Endothelial cell of umbilical vein (primary cell): ENCODE measurements at regions of chr9 and their contacts with region 1.

Region 1: GRCh38 chr9:114653556-114654159 is 3.9 kb downstream of the TEX53 start:
- DNase-seq: peak; percentile 76
- H3K4me3 ChIP-seq: no peak overlapping the region
- H3K27ac ChIP-seq: no peak overlapping the region
- H3K4me1 ChIP-seq: no peaks in the 10 kb centered on the region
- H3K27me3 ChIP-seq: peaks cover 0 to 1% of the 10 kb centered on the region in 2 experiments
- CTCF ChIP-seq: peak; percentile 89 to 93
- POLR2A ChIP-seq: no peak

Region 2: GRCh38 chr9:114339130-114339908 is 314.3 kb before region 1 on chr9:
- CTCF ChIA-PET with region 1: interaction called, 9 read pairs
- POLR2A ChIA-PET with region 1: no interaction called
- dilution Hi-C with region 1: no loop called
- intact Hi-C with region 1: loop called (anchors 1 kb)
- DNase-seq: peak; percentile 29
- H3K4me3 ChIP-seq: no peak overlapping the region
- H3K27ac ChIP-seq: no peak overlapping the region
- H3K4me1 ChIP-seq: no peaks in the 10 kb centered on the region
- H3K27me3 ChIP-seq: no peaks in the 10 kb centered on the region
- CTCF ChIP-seq: peak; percentile 88 to 89
- POLR2A ChIP-seq: no peak

Region 3: GRCh38 chr9:114446036-114446435 is 207.6 kb before region 1 on chr9:
- CTCF ChIA-PET with region 1: interaction called, 10 read pairs
- POLR2A ChIA-PET with region 1: no interaction called
- dilution Hi-C with region 1: no loop called
- intact Hi-C with region 1: no loop called
- DNase-seq: peak; percentile 63
- H3K4me3 ChIP-seq: no peak overlapping the region
- H3K27ac ChIP-seq: peak overlapping the region; percentile 46
- H3K4me1 ChIP-seq: peaks cover 16% of the 10 kb centered on the region
- H3K27me3 ChIP-seq: no peaks in the 10 kb centered on the region
- CTCF ChIP-seq: no peak
- POLR2A ChIP-seq: no peak

Region 4: GRCh38 chr9:114493521-114494184 is 160.0 kb before region 1 on chr9:
- CTCF ChIA-PET with region 1: interaction called, 133 read pairs
- POLR2A ChIA-PET with region 1: no interaction called
- dilution Hi-C with region 1: no loop called
- intact Hi-C with region 1: no loop called
- DNase-seq: peak; percentile 33
- H3K4me3 ChIP-seq: no peak overlapping the region
- H3K27ac ChIP-seq: no peak overlapping the region
- H3K4me1 ChIP-seq: no peaks in the 10 kb centered on the region
- H3K27me3 ChIP-seq: peaks cover 18 to 29% of the 10 kb centered on the region in 2 experiments
- CTCF ChIP-seq: no peak
- POLR2A ChIP-seq: no peak

Region 5: DNA sequence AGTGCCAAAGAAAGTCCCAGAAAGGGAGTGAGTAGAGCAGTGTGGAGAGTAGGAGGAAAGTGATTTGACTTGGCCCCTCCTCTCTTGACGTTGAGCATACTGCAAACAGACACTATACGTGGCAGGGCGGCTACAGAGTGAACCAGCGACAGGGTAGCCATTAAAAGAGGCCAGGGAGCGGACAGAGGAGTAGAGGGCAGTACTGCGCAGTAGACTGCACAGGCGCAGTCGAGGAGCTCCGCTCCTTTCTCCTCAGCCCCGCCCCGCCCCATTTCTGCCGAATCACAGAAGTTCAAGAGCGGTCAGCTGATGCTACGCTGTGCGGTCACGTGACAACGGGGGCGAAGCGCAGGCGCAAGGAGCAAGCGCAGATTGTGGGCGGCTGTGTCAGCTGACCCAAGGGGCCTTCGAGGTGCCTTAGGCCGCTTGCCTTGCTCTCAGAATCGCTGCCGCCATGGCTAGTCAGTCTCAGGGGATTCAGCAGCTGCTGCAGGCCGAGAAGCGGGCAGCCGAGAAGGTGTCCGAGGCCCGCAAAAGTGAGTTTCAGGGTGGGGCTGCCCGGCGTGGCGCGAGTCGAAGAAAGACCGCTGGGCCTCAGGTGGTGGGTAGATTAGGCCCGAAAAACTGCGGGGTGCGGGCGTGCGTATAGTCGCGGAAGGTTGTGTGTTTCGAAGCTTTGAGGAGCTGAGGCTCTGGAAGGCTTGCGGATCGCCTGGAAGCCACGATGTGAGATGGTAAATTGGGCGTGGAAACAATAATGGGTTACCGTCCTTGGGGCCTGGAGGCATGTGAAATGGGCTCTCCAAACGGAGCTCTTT is 66.1 kb before region 1 on chr9 and contains the start of gene ATP6V1G1:
- CTCF ChIA-PET with region 1: interaction called, 90 read pairs
- POLR2A ChIA-PET with region 1: interaction called, 3 read pairs
- dilution Hi-C with region 1: no loop called
- intact Hi-C with region 1: loop called (anchors 1 kb)
- DNase-seq: peak; percentile 99
- H3K4me3 ChIP-seq: peak within 1 kb of the TSS; percentile 24 to 79 (median 73)
- H3K27ac ChIP-seq: peak within 1 kb of the TSS; percentile 66
- H3K4me1 ChIP-seq: peaks cover 23% of the 10 kb centered on the region
- H3K27me3 ChIP-seq: no peaks in the 10 kb centered on the region
- CTCF ChIP-seq: peak in 1 of 2 donors; percentile 11
- POLR2A ChIP-seq: peak; percentile 91
- total RNA-seq, gene ATP6V1G1: 78.9 and 82.0 TPM in 2 replicates

Region 6: DNA sequence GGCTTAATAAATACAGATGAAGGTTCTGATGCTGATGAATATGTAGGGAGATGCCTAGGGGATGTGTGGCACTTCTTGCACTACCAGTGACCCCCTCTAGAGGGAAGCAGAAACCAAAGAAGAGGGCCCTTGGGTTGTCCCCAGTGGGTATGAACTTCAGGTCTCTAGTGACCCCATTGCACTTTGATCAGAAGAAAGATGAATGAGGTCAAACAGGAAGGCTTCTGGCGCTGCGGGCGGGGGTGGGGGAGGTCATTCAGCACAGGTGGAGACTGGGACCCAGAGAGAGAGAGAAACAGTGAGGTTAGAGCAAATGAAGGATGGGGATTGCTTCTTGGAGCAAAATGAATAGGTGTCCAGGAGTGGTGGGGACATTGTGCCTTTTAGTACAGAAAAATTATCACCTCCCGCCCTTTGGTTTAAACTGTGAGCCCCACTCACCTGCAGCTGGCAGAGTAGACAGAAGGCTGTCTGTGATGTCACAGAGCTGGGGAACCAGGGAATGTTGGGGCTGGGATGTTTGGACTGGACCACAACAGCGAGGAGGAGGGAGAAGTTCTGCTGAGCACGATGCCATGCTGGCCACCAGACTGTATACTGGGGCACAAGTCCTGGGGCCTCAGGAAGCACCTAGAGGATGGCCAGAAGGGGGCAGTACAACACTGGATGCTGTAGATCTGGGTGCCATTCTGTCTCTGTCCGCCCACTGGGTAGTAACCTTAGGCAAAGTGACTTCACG is 28.1 kb after region 1 on chr9 and contains the start of gene TEX48:
- CTCF ChIA-PET with region 1: interaction called, 10 read pairs
- POLR2A ChIA-PET with region 1: no interaction called
- dilution Hi-C with region 1: no loop called
- intact Hi-C with region 1: no loop called
- DNase-seq: peak; percentile 52
- H3K4me3 ChIP-seq: no peak within 1 kb of the TSS
- H3K27ac ChIP-seq: no peak within 1 kb of the TSS
- H3K4me1 ChIP-seq: peaks cover 23% of the 10 kb centered on the region
- H3K27me3 ChIP-seq: no peaks in the 10 kb centered on the region
- CTCF ChIP-seq: peak; percentile 67 to 78
- POLR2A ChIP-seq: no peak
- total RNA-seq, gene TEX48: not detected in 2 replicates

Region 7: GRCh38 chr9:114779352-114779845 is 125.7 kb after region 1 on chr9:
- CTCF ChIA-PET with region 1: no interaction called
- POLR2A ChIA-PET with region 1: no interaction called
- dilution Hi-C with region 1: no loop called
- intact Hi-C with region 1: no loop called
- DNase-seq: peak; percentile 100
- H3K4me3 ChIP-seq: no peak overlapping the region
- H3K27ac ChIP-seq: peak overlapping the region; percentile 86
- H3K4me1 ChIP-seq: peaks cover 31% of the 10 kb centered on the region
- H3K27me3 ChIP-seq: no peaks in the 10 kb centered on the region
- CTCF ChIP-seq: no peak
- POLR2A ChIP-seq: no peak